Endothelial cell of umbilical vein (primary cell): ENCODE measurements at regions of chr3 and their contacts with region 1.

Region 1: DNA sequence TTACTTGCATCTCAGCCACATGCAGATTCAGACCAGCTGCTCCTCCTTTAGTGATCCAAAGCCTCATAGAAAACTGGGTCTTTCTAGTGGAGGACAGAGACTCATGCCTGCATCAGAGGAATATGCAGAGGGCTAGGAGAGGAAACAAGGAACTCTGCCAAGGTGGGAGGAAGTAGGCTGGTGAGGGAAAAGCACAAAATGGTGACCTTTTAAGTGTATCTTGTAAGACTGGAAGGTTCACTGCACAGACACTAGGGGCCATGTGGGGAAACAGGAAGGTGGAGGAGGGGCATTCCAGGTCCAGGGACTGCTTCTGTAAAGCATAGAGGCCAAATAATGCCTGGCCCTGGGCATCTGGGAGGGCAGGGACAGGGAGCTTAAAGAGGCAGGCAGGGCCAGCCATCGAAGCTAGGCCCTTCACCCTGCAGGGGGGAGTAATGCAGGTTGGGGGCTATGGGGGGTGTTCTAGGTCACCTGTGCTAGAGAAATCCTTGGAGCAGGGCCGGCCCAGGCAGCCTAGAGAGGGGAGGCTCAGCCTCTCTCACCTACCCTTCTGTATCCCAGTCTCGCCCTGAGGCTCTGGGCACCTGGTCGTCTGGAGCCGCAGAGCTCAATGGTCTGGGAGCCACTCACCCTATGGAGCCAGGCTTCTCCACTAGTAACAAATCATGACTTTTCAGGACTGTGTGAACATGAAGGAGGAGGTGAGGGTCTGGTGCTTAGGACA is 117.7 kb downstream of the DNAJB8 start:
- DNase-seq: peak; percentile 29
- H3K4me3 ChIP-seq: no peak overlapping the region
- H3K27ac ChIP-seq: no peak overlapping the region
- H3K4me1 ChIP-seq: peaks cover 15% of the 10 kb centered on the region
- H3K27me3 ChIP-seq: no peaks in the 10 kb centered on the region
- CTCF ChIP-seq: no peak
- POLR2A ChIP-seq: no peak

Region 2: DNA sequence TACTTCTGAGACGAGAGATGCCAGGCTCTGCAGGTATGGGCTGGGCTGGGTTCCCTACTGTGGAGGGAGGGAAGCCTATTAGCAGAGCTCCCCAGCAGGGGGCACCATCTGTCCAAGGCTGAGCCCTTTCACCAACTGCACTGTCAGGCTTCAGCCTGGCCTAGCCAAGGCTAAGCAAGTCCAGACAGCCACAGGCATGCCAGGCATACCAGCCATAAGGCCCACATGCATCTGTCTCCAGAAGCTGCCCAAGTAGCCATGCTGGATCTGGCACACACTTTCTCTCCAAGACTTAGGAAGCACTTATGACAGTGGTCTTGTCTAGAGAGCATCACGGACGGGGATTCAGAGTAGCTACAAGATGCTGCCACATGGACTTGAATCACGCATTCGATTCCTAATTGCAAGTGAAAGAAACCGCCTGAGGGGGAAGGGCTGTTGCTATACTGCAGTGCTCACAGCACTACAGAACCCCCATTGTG is 253.7 kb before region 1 on chr3:
- CTCF ChIA-PET with region 1: no interaction called
- POLR2A ChIA-PET with region 1: no interaction called
- dilution Hi-C with region 1: no loop called
- intact Hi-C with region 1: no loop called
- DNase-seq: peak; percentile 83
- H3K4me3 ChIP-seq: no peak overlapping the region
- H3K27ac ChIP-seq: peak overlapping the region; percentile 30
- H3K4me1 ChIP-seq: peaks cover 15% of the 10 kb centered on the region
- H3K27me3 ChIP-seq: no peaks in the 10 kb centered on the region
- CTCF ChIP-seq: peak; percentile 89 to 92
- POLR2A ChIP-seq: no peak

Region 3: GRCh38 chr3:128153156-128154041 is 195.6 kb before region 1 on chr3 and contains the start of gene EEFSEC:
- CTCF ChIA-PET with region 1: no interaction called
- POLR2A ChIA-PET with region 1: no interaction called
- dilution Hi-C with region 1: no loop called
- intact Hi-C with region 1: no loop called
- DNase-seq: peak; percentile 79
- H3K4me3 ChIP-seq: peak within 1 kb of the TSS; percentile 67 to 84 (median 70)
- H3K27ac ChIP-seq: peak within 1 kb of the TSS; percentile 18
- H3K4me1 ChIP-seq: peaks cover 3% of the 10 kb centered on the region
- H3K27me3 ChIP-seq: peaks cover 0 to 2% of the 10 kb centered on the region in 2 experiments
- CTCF ChIP-seq: no peak
- POLR2A ChIP-seq: peak; percentile 60
- total RNA-seq, gene EEFSEC: 12.0 and 13.1 TPM in 2 replicates

Region 4: GRCh38 chr3:128307029-128307633 is 41.8 kb before region 1 on chr3:
- CTCF ChIA-PET with region 1: no interaction called
- POLR2A ChIA-PET with region 1: no interaction called
- dilution Hi-C with region 1: no loop called
- intact Hi-C with region 1: loop called (anchors 1 kb)
- DNase-seq: peak; percentile 16
- H3K4me3 ChIP-seq: no peak overlapping the region
- H3K27ac ChIP-seq: no peak overlapping the region
- H3K4me1 ChIP-seq: no peaks in the 10 kb centered on the region
- H3K27me3 ChIP-seq: no peaks in the 10 kb centered on the region
- CTCF ChIP-seq: peak in 1 of 2 donors; percentile 10
- POLR2A ChIP-seq: no peak

Region 5: DNA sequence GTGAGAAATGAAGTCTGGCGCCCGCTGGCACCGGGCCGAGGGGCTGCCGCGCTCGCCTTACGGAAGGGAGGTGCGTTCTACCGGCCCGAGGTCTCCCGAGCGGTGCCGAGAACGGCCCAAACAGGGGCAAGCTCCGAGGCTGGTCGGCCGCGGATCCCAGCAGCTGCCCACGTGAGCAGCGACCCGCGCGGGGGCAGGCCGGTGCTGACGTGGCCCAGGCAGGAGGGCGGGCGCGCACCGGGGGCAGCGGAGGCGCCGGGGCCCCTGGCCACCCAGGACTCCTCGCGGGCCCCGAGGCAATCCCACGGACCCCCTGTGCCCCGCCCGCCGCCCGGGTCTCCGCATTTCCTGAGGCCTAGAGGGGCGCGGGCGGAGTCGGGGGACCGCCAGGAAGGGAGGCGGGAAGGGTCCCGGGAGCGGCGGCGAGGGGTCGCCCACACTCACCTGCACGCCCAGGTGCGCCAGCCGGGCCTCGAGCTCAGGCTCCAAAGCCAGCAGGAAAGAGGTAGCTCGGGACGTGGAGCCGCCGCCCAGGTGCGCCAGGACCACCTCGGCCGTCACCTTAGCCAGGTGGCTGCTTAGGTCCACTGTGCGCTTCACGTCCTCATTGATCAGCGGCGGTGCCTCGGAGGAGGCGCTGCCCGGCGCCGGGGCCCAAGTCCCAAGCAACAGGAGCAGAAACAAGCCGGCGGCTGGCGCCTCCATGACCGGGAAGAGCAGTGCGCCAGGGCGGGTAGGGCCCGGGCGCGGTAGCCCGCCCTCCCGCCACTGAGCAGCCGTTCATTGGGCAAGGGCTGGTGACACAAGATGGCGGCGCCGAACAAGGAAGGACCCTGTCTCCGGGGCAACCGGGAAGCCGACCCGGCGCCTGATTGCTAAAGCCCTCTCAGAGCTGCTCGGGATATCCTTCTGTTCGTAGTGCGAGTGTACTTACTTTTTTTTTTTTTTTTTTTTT is 301.4 kb after region 1 on chr3 and contains the start of gene RPN1:
- CTCF ChIA-PET with region 1: no interaction called
- POLR2A ChIA-PET with region 1: no interaction called
- dilution Hi-C with region 1: no loop called
- intact Hi-C with region 1: no loop called
- DNase-seq: peak; percentile 97
- H3K4me3 ChIP-seq: peak within 1 kb of the TSS; percentile 92 to 99 (median 96)
- H3K27ac ChIP-seq: peak within 1 kb of the TSS; percentile 95
- H3K4me1 ChIP-seq: peaks cover 8% of the 10 kb centered on the region
- H3K27me3 ChIP-seq: no peaks in the 10 kb centered on the region
- CTCF ChIP-seq: no peak
- POLR2A ChIP-seq: peak; percentile 89
- total RNA-seq, gene RPN1: 244 and 250 TPM in 2 replicates

Region 6: DNA sequence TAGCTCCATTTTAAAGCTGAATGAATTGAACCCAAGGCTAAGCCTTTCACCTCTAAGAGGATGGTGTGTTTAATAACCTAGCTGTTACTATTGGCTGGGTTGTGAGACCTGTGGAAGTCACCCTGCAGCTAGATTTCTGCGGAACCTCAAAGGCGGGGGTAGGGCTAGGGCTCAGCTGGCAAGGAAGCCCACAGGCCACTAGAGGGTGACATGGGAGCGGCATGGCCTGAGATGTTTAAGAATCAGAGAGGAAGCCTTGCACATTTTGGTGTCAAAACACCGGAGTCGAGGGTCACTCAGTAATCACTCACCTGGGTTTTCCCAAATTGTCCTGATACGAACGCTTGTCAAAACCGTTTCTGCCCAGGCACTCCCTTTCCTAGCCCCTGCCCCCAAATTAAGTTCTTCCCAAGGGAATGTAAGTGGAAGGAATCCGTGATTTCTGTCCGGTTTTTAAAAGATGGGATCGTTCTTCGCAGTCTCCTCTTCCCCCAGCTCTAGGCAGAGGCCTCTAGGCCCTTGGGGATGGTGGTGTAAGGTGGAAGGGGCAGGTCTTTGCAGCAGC is 526.7 kb after region 1 on chr3:
- CTCF ChIA-PET with region 1: no interaction called
- POLR2A ChIA-PET with region 1: no interaction called
- dilution Hi-C with region 1: no loop called
- intact Hi-C with region 1: no loop called
- DNase-seq: peak; percentile 26
- H3K4me3 ChIP-seq: no peak overlapping the region
- H3K27ac ChIP-seq: no peak overlapping the region
- H3K4me1 ChIP-seq: peaks cover 16% of the 10 kb centered on the region
- H3K27me3 ChIP-seq: peaks cover 6 to 7% of the 10 kb centered on the region in 2 experiments
- CTCF ChIP-seq: peak; percentile 54 to 69
- POLR2A ChIP-seq: no peak